ENCODE measurements at regions of chr10 and their contacts with region 1.

Region 1: DNA sequence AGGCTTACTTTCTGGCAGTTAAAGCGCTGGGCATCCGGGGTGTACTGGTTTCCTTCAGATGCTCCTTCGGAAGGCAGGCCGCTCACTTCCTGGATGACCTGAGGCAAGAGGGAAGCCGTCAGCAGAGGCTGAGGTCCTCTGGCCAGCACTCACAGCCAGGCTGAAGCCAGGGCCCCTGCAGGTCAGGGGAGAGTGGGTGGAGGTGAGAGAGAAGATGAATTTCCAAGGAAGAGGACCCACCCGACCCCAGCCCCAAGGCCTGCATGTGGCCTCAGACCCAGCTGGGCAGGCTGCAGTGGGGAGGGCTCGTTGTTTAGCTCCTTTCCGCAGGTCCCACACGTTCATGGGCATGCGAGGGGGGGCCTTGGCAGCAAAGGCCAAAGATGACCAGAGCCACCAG is 71.3 kb downstream of the VWA2 start:
- DNase-seq: no peak
- H3K4me3 ChIP-seq: no peak overlapping the region
- CTCF ChIP-seq: no peak

Region 2: DNA sequence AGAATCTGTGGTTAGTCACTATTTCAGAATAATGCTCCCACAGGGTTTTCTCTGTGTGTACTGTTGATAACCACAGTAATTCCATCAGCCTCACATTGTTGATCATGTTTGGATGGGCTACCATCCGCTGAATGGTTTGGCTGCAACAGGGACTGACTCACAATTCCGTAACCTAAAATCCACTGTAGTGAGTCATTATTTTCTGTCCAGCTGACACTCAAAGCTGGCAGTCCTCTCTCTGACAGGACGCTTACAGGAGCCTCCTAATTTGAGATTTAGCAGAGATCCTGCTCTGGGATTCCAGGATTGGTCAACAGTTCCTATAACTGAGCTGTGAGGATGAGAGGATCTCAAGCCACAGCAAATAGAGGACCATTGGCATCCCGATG is 38.6 kb before region 1 on chr10:
- in situ Hi-C with region 1: no loop called
- DNase-seq: peak; percentile 96
- H3K4me3 ChIP-seq: no peak overlapping the region
- CTCF ChIP-seq: no peak

Region 3: DNA sequence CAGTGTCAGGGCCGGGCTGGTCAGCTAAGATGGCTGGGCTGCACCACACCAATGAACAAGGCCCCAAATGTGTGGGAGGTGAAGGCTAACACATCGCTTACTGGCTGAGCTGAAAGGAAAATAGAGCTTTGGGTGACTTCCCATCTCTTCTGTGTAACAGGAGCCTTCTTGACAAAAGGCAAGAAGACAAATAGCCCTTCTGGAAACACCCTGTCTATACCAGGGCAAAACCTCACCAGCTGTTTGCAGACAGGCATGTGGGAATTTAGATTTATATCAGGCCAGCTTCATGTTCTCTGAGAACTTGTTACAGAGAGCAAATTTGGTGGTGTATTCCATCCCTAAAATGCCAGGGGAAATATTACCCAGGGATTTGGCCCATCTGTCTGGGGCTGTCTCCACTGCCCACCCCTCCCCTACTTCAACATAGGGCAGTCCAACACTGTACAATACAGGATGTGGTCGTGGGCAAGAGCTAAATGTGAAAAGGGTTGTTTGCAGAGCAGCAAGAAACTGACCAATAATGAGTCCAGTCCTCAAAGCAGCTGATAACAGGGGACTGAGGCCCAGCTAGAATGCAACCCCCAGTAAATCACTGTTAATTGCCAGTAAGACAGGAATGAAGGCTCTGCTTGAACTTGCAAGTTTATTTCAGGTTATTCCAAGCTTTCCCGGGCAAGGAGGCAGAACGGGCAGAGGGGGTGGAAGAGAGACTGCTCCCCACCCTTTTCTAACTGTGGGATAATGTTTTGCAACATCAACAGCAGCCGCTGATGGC is 56.9 kb after region 1 on chr10:
- in situ Hi-C with region 1: no loop called
- DNase-seq: no peak
- H3K4me3 ChIP-seq: no peak overlapping the region
- CTCF ChIP-seq: no peak

Region 4: DNA sequence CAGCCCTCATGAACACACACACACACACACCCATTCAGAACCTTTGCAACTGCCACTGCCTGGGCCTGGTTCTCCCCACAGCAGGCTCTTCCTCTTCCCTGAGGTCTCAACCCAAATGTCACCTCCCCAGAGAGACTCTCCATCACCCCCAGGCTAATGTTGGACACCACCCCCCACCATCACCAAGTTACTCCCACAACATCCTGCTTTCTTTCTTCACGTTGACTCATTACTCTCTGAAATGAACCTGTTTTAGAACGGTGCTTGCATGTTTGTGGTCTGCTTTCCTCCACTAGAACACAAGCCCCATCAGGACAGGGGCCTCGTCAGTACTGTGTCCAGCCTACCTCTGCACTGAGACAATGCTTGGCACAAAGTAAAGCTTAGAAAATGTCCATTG is 77.9 kb after region 1 on chr10:
- in situ Hi-C with region 1: loop called (anchors 5 kb)
- DNase-seq: no peak
- H3K4me3 ChIP-seq: no peak overlapping the region
- CTCF ChIP-seq: no peak